OCI-LY7 (cell line): ENCODE measurements at regions of chr11 and their contacts with region 1.

Region 1: DNA sequence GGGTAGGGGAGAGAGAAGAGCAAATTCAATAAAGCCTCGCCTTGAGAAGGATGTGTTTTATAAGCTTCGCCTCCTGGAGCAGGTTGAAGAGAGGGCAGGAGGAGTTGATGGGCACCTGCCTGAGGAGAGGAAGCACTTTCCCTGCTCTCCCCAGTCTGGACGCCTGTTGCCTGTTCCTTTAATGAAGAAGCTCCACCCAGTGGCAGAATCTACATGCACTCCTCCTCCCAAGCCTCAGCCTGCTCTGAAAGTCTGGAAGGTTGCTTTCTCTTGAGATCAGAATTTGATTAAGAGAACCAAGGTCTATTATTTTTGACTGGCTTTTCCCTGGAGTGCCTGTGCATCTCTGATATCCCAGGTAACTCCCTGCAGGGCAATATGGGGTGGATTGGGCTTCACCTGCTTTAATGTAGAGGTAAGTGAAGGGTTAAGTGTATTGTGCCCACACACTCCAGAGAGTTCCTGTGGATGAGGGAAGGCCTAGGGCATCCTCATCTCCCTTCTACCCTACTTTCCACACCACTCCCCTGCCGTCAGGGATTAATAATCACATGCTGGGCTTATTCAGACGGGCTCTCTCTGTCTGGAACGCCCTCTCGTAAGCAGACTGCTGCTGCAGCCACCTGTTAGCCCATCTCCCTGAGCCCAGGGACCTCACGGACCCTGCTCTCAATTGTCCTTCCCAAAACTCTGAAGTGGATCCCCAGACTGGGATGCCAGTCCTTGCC is 22.3 kb downstream of the NTM start:
- DNase-seq: peak; percentile 16
- H3K4me3 ChIP-seq: no peak overlapping the region
- H3K27ac ChIP-seq: no peak overlapping the region
- H3K4me1 ChIP-seq: no peaks in the 10 kb centered on the region
- CTCF ChIP-seq: peak; percentile 51; the same call in 1 of the 2 replicates

Region 2: GRCh38 chr11:131246663-131247062 is 146.0 kb before region 1 on chr11:
- CTCF ChIA-PET with region 1: no interaction called
- POLR2A ChIA-PET with region 1: interaction called, 4 read pairs
- intact Hi-C with region 1: loop called (anchors 10 kb)
- DNase-seq: peak; percentile 1
- H3K4me3 ChIP-seq: no peak overlapping the region
- H3K27ac ChIP-seq: no peak overlapping the region
- H3K4me1 ChIP-seq: no peaks in the 10 kb centered on the region
- CTCF ChIP-seq: peak; percentile 63